ENCODE measurements at regions of chr12 and their contacts with region 1.

Region 1: GRCh38 chr12:132687208-132688164 is at the starts of genes POLE and PXMP2:
- DNase-seq: peak; percentile 90
- H3K4me3 Mint-ChIP-seq: peak within 1 kb of the TSS; percentile 82
- H3K27ac Mint-ChIP-seq: peak within 1 kb of the TSS; percentile 75
- H3K4me1 Mint-ChIP-seq: peaks cover 22% of the 10 kb centered on the region
- H3K27me3 Mint-ChIP-seq: no peaks in the 10 kb centered on the region
- total RNA-seq, gene POLE: 152 and 159 TPM in 2 replicates
- total RNA-seq, gene PXMP2: 19.1 and 23.2 TPM in 2 replicates

Region 2: GRCh38 chr12:132639956-132640520 is 47.4 kb before region 1 on chr12:
- intact Hi-C with region 1: no loop called
- DNase-seq: no peak
- H3K4me3 Mint-ChIP-seq: no peak overlapping the region
- H3K27ac Mint-ChIP-seq: no peak overlapping the region
- H3K4me1 Mint-ChIP-seq: no peaks in the 10 kb centered on the region
- H3K27me3 Mint-ChIP-seq: no peaks in the 10 kb centered on the region

Region 3: GRCh38 chr12:132710422-132711168 is 23.1 kb after region 1 on chr12 and contains the start of gene PGAM5:
- intact Hi-C with region 1: loop called (anchors 1 kb)
- DNase-seq: peak; percentile 88
- H3K4me3 Mint-ChIP-seq: peak within 1 kb of the TSS; percentile 90
- H3K27ac Mint-ChIP-seq: peak within 1 kb of the TSS; percentile 80
- H3K4me1 Mint-ChIP-seq: peaks cover 12% of the 10 kb centered on the region
- H3K27me3 Mint-ChIP-seq: no peaks in the 10 kb centered on the region
- total RNA-seq, gene PGAM5: 78.6 and 80.7 TPM in 2 replicates

Region 4: GRCh38 chr12:132908145-132909044 is 220.9 kb after region 1 on chr12:
- intact Hi-C with region 1: loop called (anchors 2 kb)
- DNase-seq: peak; percentile 93
- H3K4me3 Mint-ChIP-seq: peak overlapping the region; percentile 86
- H3K27ac Mint-ChIP-seq: peak overlapping the region; percentile 94
- H3K4me1 Mint-ChIP-seq: peaks cover 4% of the 10 kb centered on the region
- H3K27me3 Mint-ChIP-seq: peaks cover 13% of the 10 kb centered on the region

Region 5: GRCh38 chr12:132946246-132946820 is 258.8 kb after region 1 on chr12:
- intact Hi-C with region 1: no loop called
- DNase-seq: no peak
- H3K4me3 Mint-ChIP-seq: no peak overlapping the region
- H3K27ac Mint-ChIP-seq: no peak overlapping the region
- H3K4me1 Mint-ChIP-seq: no peaks in the 10 kb centered on the region
- H3K27me3 Mint-ChIP-seq: no peaks in the 10 kb centered on the region